CD4-positive, alpha-beta memory T cell (primary cell): ENCODE measurements at regions of chr3 and their contacts with region 1.

Region 1: DNA sequence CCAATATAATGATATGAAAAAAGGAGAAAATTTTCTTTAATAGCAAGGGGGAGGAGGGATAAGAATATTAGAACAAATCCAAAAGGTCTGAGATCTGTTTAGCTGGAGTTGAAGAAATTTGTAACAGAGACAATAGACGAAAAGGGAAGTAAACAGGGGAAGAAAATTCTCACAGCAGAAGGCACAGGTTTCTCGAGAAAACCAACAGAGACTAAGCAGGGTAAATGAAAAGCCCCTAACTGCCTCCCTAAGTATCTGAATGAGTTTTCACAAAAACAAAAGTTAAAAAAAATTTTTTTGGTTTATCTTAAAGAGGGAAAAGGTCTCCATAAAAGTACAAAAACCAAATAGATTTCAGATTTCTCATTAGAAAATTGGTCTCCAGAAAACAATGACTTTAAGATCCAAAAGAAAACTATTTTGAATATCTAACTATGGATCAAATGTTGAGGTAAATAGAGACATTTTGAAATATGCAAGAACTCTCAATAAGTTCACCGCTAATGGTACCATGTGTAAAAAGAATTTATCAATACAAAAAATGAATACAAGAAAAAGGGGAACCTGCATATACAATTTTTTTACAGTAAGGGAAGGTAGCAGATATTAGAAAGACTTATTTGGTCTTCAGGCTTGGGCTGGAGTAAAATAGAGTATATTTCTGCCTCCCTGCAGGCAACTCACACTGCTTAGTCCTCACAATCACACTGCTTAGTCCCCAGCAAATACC is 23.9 kb upstream of the NEK10 start:
- DNase-seq: no peak
- H3K4me3 ChIP-seq: no peak overlapping the region
- H3K4me3 Mint-ChIP-seq: no peak overlapping the region
- H3K27ac ChIP-seq: no peak overlapping the region
- H3K27ac Mint-ChIP-seq: peak overlapping the region in 3 of 7 donors; percentile 17 to 35 (median 27)
- H3K4me1 ChIP-seq: no peaks in the 10 kb centered on the region
- H3K4me1 Mint-ChIP-seq: peaks cover 6 to 10% (median 8%) of the 10 kb centered on the region in 4 donors
- H3K27me3 ChIP-seq: no peaks in the 10 kb centered on the region
- H3K27me3 Mint-ChIP-seq: no peaks in the 10 kb centered on the region

Region 2: DNA sequence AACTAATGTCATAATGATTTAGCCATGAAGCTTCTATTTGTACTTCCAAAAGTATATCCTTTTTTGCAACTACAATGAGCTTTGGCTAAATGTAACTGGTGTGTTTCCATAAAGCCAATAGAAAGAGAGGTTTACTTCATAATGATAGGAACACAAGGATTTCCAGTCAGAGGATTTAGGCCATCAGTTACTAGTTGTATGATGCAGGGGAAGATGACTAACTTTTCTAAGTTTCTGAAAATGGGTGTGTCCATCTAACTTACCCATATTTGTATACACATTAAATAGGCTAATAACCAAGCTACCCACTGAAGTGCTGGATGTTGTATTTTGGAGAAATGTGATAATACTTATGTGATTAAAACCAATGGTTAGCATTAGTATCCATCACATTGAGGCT is 35.3 kb after region 1 on chr3:
- CTCF ChIA-PET with region 1: no interaction called
- POLR2A ChIA-PET with region 1: no interaction called
- intact Hi-C with region 1: loop called (anchors 5 kb)
- DNase-seq: no peak
- H3K4me3 ChIP-seq: no peak overlapping the region
- H3K4me3 Mint-ChIP-seq: no peak overlapping the region
- H3K27ac ChIP-seq: no peak overlapping the region
- H3K27ac Mint-ChIP-seq: no peak overlapping the region
- H3K4me1 ChIP-seq: no peaks in the 10 kb centered on the region
- H3K4me1 Mint-ChIP-seq: peaks cover 2 to 7% (median 4%) of the 10 kb centered on the region in 4 donors
- H3K27me3 ChIP-seq: no peaks in the 10 kb centered on the region
- H3K27me3 Mint-ChIP-seq: no peaks in the 10 kb centered on the region